Caco-2 (cell line): ENCODE measurements at regions of chr5 and their contacts with region 1.

Region 1: DNA sequence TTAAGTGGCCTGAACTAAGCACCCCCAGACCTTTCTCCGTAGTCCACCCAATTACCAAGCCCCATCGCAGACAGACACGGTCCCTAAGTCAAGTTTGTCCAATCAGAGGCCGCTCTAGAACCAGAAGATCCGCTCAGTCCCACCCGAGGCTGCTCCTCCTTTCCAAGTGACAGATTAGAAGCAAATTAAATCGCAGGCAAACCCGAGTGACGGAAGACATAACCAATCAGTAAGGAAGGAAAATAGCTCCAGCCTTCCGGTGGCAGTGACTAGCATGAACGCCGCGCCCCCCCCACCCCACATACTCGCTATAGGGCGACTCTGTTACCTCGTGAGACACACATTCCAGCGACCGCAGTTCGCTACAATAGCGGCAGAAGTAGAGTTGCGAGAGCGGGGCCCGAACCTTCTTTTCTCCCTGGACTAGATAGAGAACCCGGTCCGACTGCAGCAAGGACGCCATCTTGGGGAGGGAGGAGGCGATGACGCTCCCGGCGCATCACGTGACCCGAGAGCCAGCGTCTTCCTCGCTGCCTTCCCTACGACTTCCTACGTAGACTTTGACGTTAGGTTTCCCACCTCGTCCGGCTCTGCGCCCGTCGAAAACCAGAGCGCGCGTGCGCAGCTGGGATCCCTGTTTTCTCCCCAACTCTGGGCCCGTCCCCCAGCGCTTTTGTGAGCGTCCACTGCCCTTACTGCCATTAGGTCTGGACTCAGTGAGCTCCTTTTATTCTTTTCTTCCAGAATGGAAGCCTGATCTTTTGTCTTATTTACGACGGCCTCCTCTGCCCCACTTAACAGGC is at the start of gene DCTN4:
- DNase-seq: peak; percentile 94 to 97
- H3K4me3 ChIP-seq: peak within 1 kb of the TSS; percentile 67
- H3K4me3 Mint-ChIP-seq: no peak within 1 kb of the TSS
- H3K27ac Mint-ChIP-seq: no peak within 1 kb of the TSS
- H3K4me1 ChIP-seq: peaks cover 7% of the 10 kb centered on the region
- H3K4me1 Mint-ChIP-seq: peaks cover 8% of the 10 kb centered on the region
- H3K27me3 ChIP-seq: no peaks in the 10 kb centered on the region
- H3K27me3 Mint-ChIP-seq: no peaks in the 10 kb centered on the region
- CTCF ChIP-seq: no peak
- total RNA-seq, gene DCTN4: 55.8 and 62.2 TPM in 2 replicates

Region 2: GRCh38 chr5:150449517-150450339 is 309.0 kb before region 1 on chr5 and contains the start of gene RPS14:
- CTCF ChIA-PET with region 1: no interaction called
- POLR2A ChIA-PET with region 1: interaction called, 3 read pairs
- intact Hi-C with region 1: loop called (anchors 10 kb)
- DNase-seq: peak; percentile 93 to 95
- H3K4me3 ChIP-seq: peak within 1 kb of the TSS; percentile 66
- H3K4me3 Mint-ChIP-seq: peak within 1 kb of the TSS; percentile 89
- H3K27ac Mint-ChIP-seq: peak within 1 kb of the TSS; percentile 99
- H3K4me1 ChIP-seq: 0 out of 2 replicates have a peak, but pooled peaks cover 4% of the 10 kb centered on the region
- H3K4me1 Mint-ChIP-seq: peaks cover 8% of the 10 kb centered on the region
- H3K27me3 ChIP-seq: no peaks in the 10 kb centered on the region
- H3K27me3 Mint-ChIP-seq: no peaks in the 10 kb centered on the region
- CTCF ChIP-seq: peak; percentile 85 to 92
- total RNA-seq, gene RPS14: 2,300 and 2,382 TPM in 2 replicates

Region 3: GRCh38 chr5:150700594-150701293 is 58.0 kb before region 1 on chr5 and contains the start of gene RBM22:
- CTCF ChIA-PET with region 1: interaction called, 5 read pairs
- POLR2A ChIA-PET with region 1: interaction called, 15 read pairs
- intact Hi-C with region 1: no loop called
- DNase-seq: peak; percentile 91 to 93
- H3K4me3 ChIP-seq: peak within 1 kb of the TSS; percentile 98
- H3K4me3 Mint-ChIP-seq: no peak within 1 kb of the TSS
- H3K27ac Mint-ChIP-seq: no peak within 1 kb of the TSS
- H3K4me1 ChIP-seq: no peaks in the 10 kb centered on the region
- H3K4me1 Mint-ChIP-seq: no peaks in the 10 kb centered on the region
- H3K27me3 ChIP-seq: no peaks in the 10 kb centered on the region
- H3K27me3 Mint-ChIP-seq: no peaks in the 10 kb centered on the region
- CTCF ChIP-seq: peak; percentile 57 to 72
- total RNA-seq, gene RBM22: 55.3 TPM in 2 replicates

Region 4: GRCh38 chr5:150740992-150741391 is 17.7 kb before region 1 on chr5:
- CTCF ChIA-PET with region 1: interaction called, 4 read pairs
- POLR2A ChIA-PET with region 1: no interaction called
- intact Hi-C with region 1: loop called (anchors 2 kb)
- DNase-seq: no peak
- H3K4me3 ChIP-seq: no peak overlapping the region
- H3K4me3 Mint-ChIP-seq: no peak overlapping the region
- H3K27ac Mint-ChIP-seq: no peak overlapping the region
- H3K4me1 ChIP-seq: no peaks in the 10 kb centered on the region
- H3K4me1 Mint-ChIP-seq: peaks cover 15% of the 10 kb centered on the region
- H3K27me3 ChIP-seq: no peaks in the 10 kb centered on the region
- H3K27me3 Mint-ChIP-seq: no peaks in the 10 kb centered on the region
- CTCF ChIP-seq: no peak

Region 5: DNA sequence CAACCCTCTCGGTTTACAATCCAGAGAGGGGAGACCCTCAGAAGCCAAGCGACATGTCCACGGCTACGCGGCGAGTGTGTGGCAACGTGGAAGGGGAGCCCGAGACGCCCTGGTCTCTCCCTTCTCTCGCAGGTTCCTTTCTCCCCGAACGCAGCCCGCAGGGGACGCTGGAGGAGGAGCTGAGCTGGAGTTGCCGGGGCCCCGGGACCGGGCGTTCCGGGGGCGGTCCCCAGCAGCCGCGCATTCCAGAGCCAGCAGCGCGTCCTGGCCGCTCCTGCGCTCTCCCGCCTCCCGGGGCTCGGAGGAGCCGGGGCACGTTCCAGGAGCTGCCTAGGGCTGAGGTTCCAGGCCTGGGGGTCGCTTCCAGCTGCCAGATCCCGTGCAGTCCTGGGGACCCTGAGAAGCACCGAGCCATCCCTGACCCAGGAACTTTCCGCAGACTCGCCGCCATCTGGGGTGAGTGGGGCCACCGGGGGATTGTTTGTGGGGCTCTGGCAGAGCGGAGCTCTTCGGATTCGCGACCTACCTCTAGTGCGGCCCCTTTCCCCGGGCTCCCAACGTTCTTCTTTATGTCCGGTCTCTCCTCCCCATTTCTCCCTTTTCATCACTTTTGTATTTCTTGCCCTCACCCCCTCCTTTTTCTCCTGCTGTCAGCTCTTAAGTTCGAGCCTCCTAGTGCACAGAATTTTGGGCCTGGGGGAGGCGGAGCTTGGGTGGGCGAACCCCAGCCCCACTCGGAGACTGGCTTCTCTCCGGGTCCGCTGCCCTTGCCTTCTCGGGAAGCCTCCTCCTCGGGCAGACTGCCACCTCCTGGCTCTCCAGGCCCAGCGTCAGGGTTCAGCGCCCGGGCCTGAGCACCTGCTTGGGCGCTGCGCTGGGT is 20.0 kb after region 1 on chr5 and contains the start of gene SMIM3:
- CTCF ChIA-PET with region 1: interaction called, 10 read pairs
- POLR2A ChIA-PET with region 1: interaction called, 26 read pairs
- intact Hi-C with region 1: loop called (anchors 1 kb)
- DNase-seq: peak; percentile 86 to 89
- H3K4me3 ChIP-seq: peak within 1 kb of the TSS; percentile 75
- H3K4me3 Mint-ChIP-seq: peak within 1 kb of the TSS; percentile 91
- H3K27ac Mint-ChIP-seq: peak within 1 kb of the TSS; percentile 80
- H3K4me1 ChIP-seq: peaks cover 34% of the 10 kb centered on the region
- H3K4me1 Mint-ChIP-seq: peaks cover 32% of the 10 kb centered on the region
- H3K27me3 ChIP-seq: no peaks in the 10 kb centered on the region
- H3K27me3 Mint-ChIP-seq: no peaks in the 10 kb centered on the region
- CTCF ChIP-seq: peak; percentile 35 to 83
- total RNA-seq, gene SMIM3: 19.2 and 19.4 TPM in 2 replicates